Endothelial cell of umbilical vein (primary cell): ENCODE measurements at regions of chr3 and their contacts with region 1.

Region 1: DNA sequence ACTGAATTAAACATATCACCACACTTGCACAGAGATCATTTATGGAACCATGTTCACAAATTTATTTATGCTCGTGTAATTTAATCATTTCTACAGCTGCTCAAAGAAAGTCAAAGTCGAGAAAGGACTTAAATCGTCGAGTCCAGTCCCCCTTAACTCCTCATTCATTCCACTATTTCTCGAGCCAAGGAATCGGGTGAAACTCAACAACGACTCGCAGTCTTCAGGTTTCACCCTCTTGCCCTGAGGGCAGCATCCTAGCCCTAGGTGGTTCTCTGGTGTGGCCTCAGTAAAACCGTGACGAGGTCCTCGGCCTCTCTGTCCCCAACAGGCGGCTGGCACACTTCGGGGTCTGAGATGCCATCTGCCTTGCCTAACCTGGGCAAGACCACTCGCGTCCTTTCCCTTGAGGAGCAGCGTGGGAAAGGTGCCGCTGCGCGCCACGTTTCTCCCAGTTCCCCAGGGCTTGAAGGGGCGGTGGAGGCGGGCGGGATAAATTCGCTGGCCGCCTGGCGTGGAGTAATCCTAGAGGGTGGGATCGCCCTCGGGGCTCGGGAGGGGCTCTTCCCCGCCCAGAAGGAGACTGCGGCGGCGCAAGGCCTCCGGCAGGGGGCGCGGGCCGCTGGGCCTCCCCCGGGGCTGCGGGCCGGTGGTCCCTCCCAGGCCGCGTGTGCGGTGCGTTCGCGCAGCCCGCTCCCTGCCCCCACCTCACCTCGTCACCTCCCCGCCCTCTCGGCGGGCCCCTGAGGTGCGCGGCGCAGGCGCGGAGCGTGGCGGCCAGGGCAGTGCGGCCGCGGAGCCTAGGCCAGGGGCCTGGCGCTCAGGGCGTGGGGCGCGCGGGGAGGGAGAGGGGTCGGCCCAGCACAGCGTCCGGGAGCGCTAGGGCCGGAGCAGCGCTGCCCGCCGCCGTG is at the start of gene ZNF639:
- DNase-seq: peak; percentile 90
- H3K4me3 ChIP-seq: peak within 1 kb of the TSS; percentile 70 to 90 (median 87)
- H3K27ac ChIP-seq: peak within 1 kb of the TSS; percentile 74
- H3K4me1 ChIP-seq: peaks cover 19% of the 10 kb centered on the region
- H3K27me3 ChIP-seq: no peaks in the 10 kb centered on the region
- CTCF ChIP-seq: peak; percentile 83 to 88
- POLR2A ChIP-seq: peak; percentile 36
- total RNA-seq, gene ZNF639: 28.4 and 30.5 TPM in 2 replicates

Region 2: GRCh38 chr3:179015551-179016020 is 307.0 kb before region 1 on chr3:
- CTCF ChIA-PET with region 1: interaction called, 60 read pairs
- POLR2A ChIA-PET with region 1: no interaction called
- dilution Hi-C with region 1: no loop called
- intact Hi-C with region 1: loop called (anchors 1 kb)
- DNase-seq: peak; percentile 86
- H3K4me3 ChIP-seq: no peak overlapping the region
- H3K27ac ChIP-seq: no peak overlapping the region
- H3K4me1 ChIP-seq: peaks cover 6% of the 10 kb centered on the region
- H3K27me3 ChIP-seq: no peaks in the 10 kb centered on the region
- CTCF ChIP-seq: peak; percentile 59 to 62
- POLR2A ChIP-seq: no peak

Region 3: GRCh38 chr3:179108086-179108485 is 214.5 kb before region 1 on chr3:
- CTCF ChIA-PET with region 1: interaction called, 28 read pairs
- POLR2A ChIA-PET with region 1: no interaction called
- dilution Hi-C with region 1: no loop called
- intact Hi-C with region 1: no loop called
- DNase-seq: peak; percentile 15
- H3K4me3 ChIP-seq: no peak overlapping the region
- H3K27ac ChIP-seq: no peak overlapping the region
- H3K4me1 ChIP-seq: peaks cover 9% of the 10 kb centered on the region
- H3K27me3 ChIP-seq: no peaks in the 10 kb centered on the region
- CTCF ChIP-seq: no peak
- POLR2A ChIP-seq: no peak

Region 4: DNA sequence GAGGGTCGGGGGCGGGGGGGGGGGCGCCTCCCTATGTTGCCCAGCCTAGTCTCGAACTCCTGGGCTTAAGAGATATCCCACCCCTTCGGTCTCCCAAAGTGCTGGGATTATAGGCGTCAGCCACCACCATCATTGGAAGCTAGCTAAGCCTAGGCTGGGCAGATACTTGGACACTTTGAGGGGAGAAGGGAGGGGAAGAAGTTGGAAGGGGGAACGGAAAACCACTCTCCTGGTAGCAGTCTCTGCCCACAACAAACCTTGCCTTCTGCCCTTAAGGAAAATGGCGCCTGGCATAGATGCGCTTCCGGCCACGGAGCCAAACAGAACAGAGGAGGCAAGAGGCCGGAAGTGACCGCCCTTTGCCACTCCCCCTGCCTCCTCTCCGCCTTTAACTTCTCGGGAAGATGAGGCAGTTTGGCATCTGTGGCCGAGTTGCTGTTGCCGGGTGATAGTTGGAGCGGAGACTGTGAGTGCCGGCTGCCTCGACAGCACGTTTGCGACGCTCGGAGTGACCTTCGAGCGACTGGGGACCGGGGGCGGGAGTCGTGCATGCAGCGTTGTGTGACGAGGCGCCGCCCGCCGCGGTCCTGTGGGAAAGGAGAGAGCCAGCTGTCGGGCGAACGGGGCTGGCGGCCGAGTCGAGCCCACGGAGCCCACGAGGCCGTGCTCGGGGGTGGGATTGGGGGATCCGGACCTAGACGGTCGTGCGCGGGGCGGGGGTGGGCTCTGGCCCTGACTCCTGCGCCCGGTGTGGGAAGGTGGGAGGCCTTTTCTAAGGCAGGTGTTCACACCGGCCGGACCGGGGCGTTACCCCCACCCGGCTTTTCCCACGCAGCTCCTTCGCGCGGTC is 25.0 kb after region 1 on chr3 and contains the start of gene MFN1:
- CTCF ChIA-PET with region 1: interaction called, 9 read pairs
- POLR2A ChIA-PET with region 1: no interaction called
- dilution Hi-C with region 1: no loop called
- intact Hi-C with region 1: loop called (anchors 1 kb)
- DNase-seq: peak; percentile 97
- H3K4me3 ChIP-seq: peak within 1 kb of the TSS; percentile 38 to 99 (median 79)
- H3K27ac ChIP-seq: peak within 1 kb of the TSS; percentile 19
- H3K4me1 ChIP-seq: peaks cover 9% of the 10 kb centered on the region
- H3K27me3 ChIP-seq: no peaks in the 10 kb centered on the region
- CTCF ChIP-seq: no peak
- POLR2A ChIP-seq: peak; percentile 92
- total RNA-seq, gene MFN1: 42.9 and 52.9 TPM in 2 replicates

Region 5: DNA sequence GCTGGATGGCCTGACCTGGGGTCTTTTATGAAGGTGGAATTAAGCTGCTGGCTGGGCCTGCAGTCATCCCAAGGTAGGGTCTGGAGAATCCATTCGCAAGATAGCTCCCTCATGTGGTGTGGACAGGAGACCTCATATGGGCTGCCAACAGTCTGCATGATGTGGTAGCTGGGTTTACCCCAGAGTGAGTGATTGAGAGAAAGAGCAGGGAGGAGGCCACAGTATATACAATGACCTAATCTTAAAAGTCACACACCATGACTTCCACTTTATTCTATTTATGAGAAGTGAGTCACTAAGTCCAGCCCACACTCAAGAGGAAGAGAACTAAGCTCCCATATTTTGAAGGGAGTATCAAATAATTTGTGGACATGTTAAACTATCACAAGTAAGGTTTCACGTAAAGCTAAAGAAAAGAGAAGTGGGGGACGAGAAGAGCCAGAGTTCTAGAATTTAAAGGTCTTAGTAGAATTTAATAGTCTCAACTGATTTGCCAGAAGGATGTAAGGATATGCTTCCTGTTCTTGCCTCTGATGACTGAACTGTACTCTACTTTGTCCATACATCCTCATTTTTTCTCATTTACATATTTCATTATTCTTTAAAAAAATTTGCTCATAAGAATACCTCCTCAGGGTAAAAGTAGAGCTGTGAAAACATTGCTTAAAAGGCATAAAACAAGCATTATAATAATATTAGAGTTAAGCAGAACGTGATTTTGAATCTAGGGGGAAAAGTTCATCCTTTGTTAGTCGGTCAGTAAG is 529.8 kb after region 1 on chr3:
- CTCF ChIA-PET with region 1: no interaction called
- POLR2A ChIA-PET with region 1: no interaction called
- dilution Hi-C with region 1: no loop called
- intact Hi-C with region 1: no loop called
- DNase-seq: peak; percentile 5
- H3K4me3 ChIP-seq: no peak overlapping the region
- H3K27ac ChIP-seq: no peak overlapping the region
- H3K4me1 ChIP-seq: no peaks in the 10 kb centered on the region
- H3K27me3 ChIP-seq: no peaks in the 10 kb centered on the region
- CTCF ChIP-seq: peak in 1 of 2 donors; percentile 18
- POLR2A ChIP-seq: no peak